A549 (cell line): ENCODE measurements at regions of chr2 and their contacts with region 1.

Region 1: DNA sequence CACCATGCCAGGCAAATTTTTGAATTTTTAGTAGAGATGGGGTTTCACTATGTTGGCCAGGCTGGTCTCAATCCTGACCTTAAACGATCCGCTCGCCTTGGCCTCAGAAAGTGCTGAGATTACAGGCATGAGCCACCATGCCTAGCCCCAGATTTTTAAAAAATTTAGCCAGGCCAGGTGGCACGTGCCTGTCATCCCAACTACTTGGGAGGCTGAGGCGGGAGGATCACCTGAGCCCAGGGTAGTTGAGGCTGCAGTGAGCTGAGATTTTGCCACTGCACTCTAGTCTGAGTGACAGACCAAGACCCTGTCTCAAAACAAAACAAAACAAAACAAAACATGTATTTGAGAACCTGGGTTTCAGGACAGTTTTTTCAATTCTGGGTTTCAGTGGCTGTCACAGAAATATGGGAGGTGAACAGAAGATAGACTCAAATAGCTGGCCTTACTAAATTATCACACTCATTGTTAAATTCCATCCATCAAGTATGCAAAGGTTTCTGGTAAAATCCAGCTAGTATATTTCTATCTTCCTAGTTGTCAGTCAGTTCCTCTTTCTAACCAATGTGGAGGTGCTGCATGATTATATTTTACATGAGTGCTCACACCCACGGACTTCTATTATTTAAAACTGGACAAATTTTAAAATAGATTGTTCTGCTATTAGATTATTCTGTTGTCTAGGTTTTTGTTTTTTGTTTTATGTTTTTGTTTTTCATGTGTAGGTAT is 5.4 kb downstream of the ALPG start:
- DNase-seq: no peak
- ATAC-seq: no peak
- H3K4me3 ChIP-seq: no peak overlapping the region
- H3K27ac ChIP-seq: no peak overlapping the region
- H3K4me1 ChIP-seq: no peaks in the 10 kb centered on the region
- CTCF ChIP-seq: no peak
- EP300 ChIP-seq: no peak
- POLR2A ChIP-seq: no peak
- RAD21 ChIP-seq: no peak

Region 2: GRCh38 chr2:232400256-232401015 is 11.6 kb before region 1 on chr2:
- CTCF ChIA-PET with region 1: interaction called, 11 read pairs
- POLR2A ChIA-PET with region 1: no interaction called
- DNase-seq: peak in 1 of 2 experiments; percentile 23
- ATAC-seq: peak; percentile 56 to 67; a peak in 5 of 6 replicates
- H3K4me3 ChIP-seq: no peak overlapping the region
- H3K27ac ChIP-seq: no peak overlapping the region
- H3K4me1 ChIP-seq: peaks cover 24% of the 10 kb centered on the region; the same call in 2 of the 3 replicates
- CTCF ChIP-seq: no peak
- EP300 ChIP-seq: no peak
- POLR2A ChIP-seq: no peak
- RAD21 ChIP-seq: no peak

Region 3: GRCh38 chr2:232422081-232422480 is 10.0 kb after region 1 on chr2:
- CTCF ChIA-PET with region 1: no interaction called
- POLR2A ChIA-PET with region 1: no interaction called
- DNase-seq: no peak
- ATAC-seq: no peak
- H3K4me3 ChIP-seq: no peak overlapping the region
- H3K27ac ChIP-seq: no peak overlapping the region
- H3K4me1 ChIP-seq: no peaks in the 10 kb centered on the region
- CTCF ChIP-seq: no peak
- EP300 ChIP-seq: no peak
- POLR2A ChIP-seq: no peak
- RAD21 ChIP-seq: no peak